ENCODE measurements at regions of chr7 and their contacts with region 1.

Region 1: GRCh38 chr7:30564243-30564892 is 30.3 kb upstream of the GARS1 start:
- DNase-seq: peak; percentile 90
- H3K4me3 Mint-ChIP-seq: no peak overlapping the region
- H3K27ac Mint-ChIP-seq: peak overlapping the region; percentile 23
- H3K4me1 Mint-ChIP-seq: peaks cover 20% of the 10 kb centered on the region
- H3K27me3 Mint-ChIP-seq: no peaks in the 10 kb centered on the region
- CTCF ChIP-seq: peak; percentile 94

Region 2: GRCh38 chr7:30276203-30276900 is 288.0 kb before region 1 on chr7:
- CTCF ChIA-PET with region 1: interaction called, 21 read pairs
- intact Hi-C with region 1: loop called (anchors 1 kb)
- DNase-seq: peak; percentile 69
- H3K4me3 Mint-ChIP-seq: no peak overlapping the region
- H3K27ac Mint-ChIP-seq: no peak overlapping the region
- H3K4me1 Mint-ChIP-seq: peaks cover 15% of the 10 kb centered on the region
- H3K27me3 Mint-ChIP-seq: no peaks in the 10 kb centered on the region
- CTCF ChIP-seq: peak; percentile 83

Region 3: DNA sequence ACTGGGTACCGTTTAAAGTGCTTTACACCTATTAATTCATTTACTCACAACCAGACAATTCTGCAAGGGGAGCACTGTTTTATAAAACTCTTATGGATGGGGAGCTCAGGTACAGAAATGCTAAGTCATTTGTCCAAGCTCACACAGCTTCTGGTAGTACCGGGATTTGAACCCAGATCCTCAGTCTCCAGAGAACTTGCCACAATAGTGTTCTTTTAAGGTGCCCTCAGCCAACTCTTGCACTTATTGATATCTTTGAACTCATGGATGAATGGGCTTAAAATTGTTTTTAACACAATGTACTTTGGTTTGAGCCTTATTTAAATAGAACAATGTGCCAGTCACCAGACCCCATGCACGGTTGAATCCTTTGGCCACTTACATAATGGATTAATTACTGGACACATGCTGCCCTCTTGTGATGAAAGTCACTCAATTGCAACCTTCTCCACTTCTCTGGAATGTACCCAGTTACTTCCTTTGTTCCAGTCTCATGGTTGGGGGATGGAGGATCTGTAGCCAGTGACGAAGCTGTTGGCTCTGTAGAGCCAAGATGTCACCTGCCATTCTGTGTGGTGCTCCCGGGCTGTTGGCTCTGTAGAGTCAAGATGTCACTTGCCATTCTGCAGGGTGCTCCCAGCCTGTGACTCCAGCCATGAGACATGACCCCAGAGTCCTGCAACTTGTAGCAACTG is 151.4 kb before region 1 on chr7:
- CTCF ChIA-PET with region 1: interaction called, 7 read pairs
- intact Hi-C with region 1: loop called (anchors 5 kb)
- DNase-seq: peak; percentile 66
- H3K4me3 Mint-ChIP-seq: no peak overlapping the region
- H3K27ac Mint-ChIP-seq: no peak overlapping the region
- H3K4me1 Mint-ChIP-seq: no peaks in the 10 kb centered on the region
- H3K27me3 Mint-ChIP-seq: no peaks in the 10 kb centered on the region
- CTCF ChIP-seq: peak; percentile 65

Region 4: GRCh38 chr7:30510124-30511075 is 54.0 kb before region 1 on chr7:
- CTCF ChIA-PET with region 1: interaction called, 42 read pairs
- intact Hi-C with region 1: loop called (anchors 1 kb)
- DNase-seq: peak; percentile 63
- H3K4me3 Mint-ChIP-seq: peak overlapping the region; percentile 59
- H3K27ac Mint-ChIP-seq: peak overlapping the region; percentile 68
- H3K4me1 Mint-ChIP-seq: peaks cover 23% of the 10 kb centered on the region
- H3K27me3 Mint-ChIP-seq: no peaks in the 10 kb centered on the region
- CTCF ChIP-seq: peak; percentile 85

Region 5: DNA sequence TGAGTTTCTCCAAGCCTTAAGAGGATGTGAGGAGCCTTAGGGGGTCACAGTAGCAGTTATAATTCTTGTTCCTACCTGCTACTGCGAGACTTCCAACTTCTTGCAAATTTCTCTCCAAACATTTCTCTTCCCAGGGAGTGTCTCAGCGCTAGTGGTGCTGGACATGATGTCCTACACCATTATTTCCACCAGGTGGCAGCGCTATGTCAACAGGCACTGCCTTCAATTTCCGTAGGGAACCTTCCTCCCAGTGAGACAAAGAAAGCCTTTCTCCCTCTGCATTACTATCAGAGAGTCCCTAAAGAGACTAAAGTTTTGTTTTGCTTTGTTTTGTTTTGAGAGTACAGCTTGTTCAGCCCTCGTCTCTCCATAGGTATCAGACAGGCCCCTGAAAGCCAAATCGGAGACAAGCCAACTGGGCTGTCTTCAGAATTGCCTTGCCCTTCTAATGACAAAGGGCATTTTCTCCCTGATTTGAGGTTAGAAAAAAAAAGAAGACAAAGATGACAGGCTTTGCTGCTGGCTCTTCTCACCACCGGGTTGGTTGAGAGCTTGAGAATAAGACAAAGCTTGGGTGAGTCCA is 15.5 kb before region 1 on chr7:
- CTCF ChIA-PET with region 1: interaction called, 60 read pairs
- intact Hi-C with region 1: loop called (anchors 1 kb)
- DNase-seq: peak; percentile 86
- H3K4me3 Mint-ChIP-seq: no peak overlapping the region
- H3K27ac Mint-ChIP-seq: no peak overlapping the region
- H3K4me1 Mint-ChIP-seq: peaks cover 39% of the 10 kb centered on the region
- H3K27me3 Mint-ChIP-seq: no peaks in the 10 kb centered on the region
- CTCF ChIP-seq: peak; percentile 91

Region 6: GRCh38 chr7:30869794-30870611 is 305.6 kb after region 1 on chr7:
- CTCF ChIA-PET with region 1: no interaction called
- intact Hi-C with region 1: no loop called
- DNase-seq: no peak
- H3K4me3 Mint-ChIP-seq: no peak overlapping the region
- H3K27ac Mint-ChIP-seq: no peak overlapping the region
- H3K4me1 Mint-ChIP-seq: no peaks in the 10 kb centered on the region
- H3K27me3 Mint-ChIP-seq: no peaks in the 10 kb centered on the region
- CTCF ChIP-seq: no peak

Measured in Calu3 (cell line).